Endothelial cell of umbilical vein (primary cell): ENCODE measurements at regions of chr1 and their contacts with region 1.

Region 1: DNA sequence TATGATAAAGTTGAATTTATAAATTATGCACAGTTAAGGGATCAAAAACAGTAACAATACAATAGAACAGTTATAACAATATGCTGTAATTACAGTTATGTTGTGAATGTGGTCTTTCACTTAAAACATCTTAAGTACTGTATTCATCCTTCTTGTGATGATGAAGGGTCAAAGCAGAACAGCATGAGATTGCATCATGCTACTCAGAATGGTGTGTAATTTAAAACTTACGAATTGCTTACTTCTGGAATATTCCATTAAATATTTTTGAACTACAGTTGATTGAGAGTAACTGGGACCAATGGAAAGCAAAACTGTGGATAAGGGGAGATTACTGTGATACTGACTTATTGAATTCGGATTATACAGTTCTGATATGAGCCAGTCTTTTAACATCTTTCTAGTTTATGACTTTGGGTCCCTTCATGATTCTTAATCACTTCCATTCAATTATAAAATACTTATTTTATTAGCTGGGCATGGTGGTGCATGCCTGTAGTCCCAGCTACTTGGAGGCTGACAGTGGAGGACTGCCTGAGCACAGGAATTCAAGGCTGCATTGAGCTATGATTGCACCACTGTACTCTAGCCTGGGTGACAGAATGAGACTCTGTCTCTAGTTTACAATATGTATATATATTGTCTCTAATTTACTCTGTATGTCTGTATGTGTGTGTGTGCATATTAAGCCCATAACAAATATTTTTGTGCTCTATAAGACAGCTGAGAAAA is 43.2 kb downstream of the ATP1B1 start:
- DNase-seq: no peak
- H3K4me3 ChIP-seq: no peak overlapping the region
- H3K27ac ChIP-seq: no peak overlapping the region
- H3K4me1 ChIP-seq: no peaks in the 10 kb centered on the region
- H3K27me3 ChIP-seq: no peaks in the 10 kb centered on the region
- CTCF ChIP-seq: no peak
- POLR2A ChIP-seq: no peak

Region 2: GRCh38 chr1:169240449-169241237 is 90.9 kb after region 1 on chr1:
- CTCF ChIA-PET with region 1: no interaction called
- POLR2A ChIA-PET with region 1: no interaction called
- dilution Hi-C with region 1: no loop called
- intact Hi-C with region 1: loop called (anchors 5 kb)
- DNase-seq: peak; percentile 58
- H3K4me3 ChIP-seq: peak overlapping the region in 1 of 3 experiments; percentile 27
- H3K27ac ChIP-seq: no peak overlapping the region
- H3K4me1 ChIP-seq: peaks cover 9% of the 10 kb centered on the region
- H3K27me3 ChIP-seq: no peaks in the 10 kb centered on the region
- CTCF ChIP-seq: no peak
- POLR2A ChIP-seq: no peak